ENCODE measurements at regions of chr1 and their contacts with region 1.

Region 1: GRCh38 chr1:221886743-221887413 is 145.0 kb upstream of the DUSP10 start:
- DNase-seq: peak; percentile 97 to 99
- H3K4me3 ChIP-seq: no peak overlapping the region; the same call in 1 of the 2 replicates
- H3K27ac ChIP-seq: peak overlapping the region; percentile 84
- H3K4me1 ChIP-seq: peaks cover 47% of the 10 kb centered on the region
- H3K27me3 ChIP-seq: no peaks in the 10 kb centered on the region
- CTCF ChIP-seq: no peak

Region 2: GRCh38 chr1:221435504-221435904 is 451.4 kb before region 1 on chr1:
- CTCF ChIA-PET with region 1: no interaction called
- POLR2A ChIA-PET with region 1: no interaction called
- intact Hi-C with region 1: loop called (anchors 1 kb)
- DNase-seq: peak in 1 of 2 experiments; percentile 45
- H3K4me3 ChIP-seq: no peak overlapping the region
- H3K27ac ChIP-seq: no peak overlapping the region
- H3K4me1 ChIP-seq: peaks cover 20% of the 10 kb centered on the region
- H3K27me3 ChIP-seq: no peaks in the 10 kb centered on the region
- CTCF ChIP-seq: peak; percentile 98

Region 3: GRCh38 chr1:221612264-221612777 is 274.6 kb before region 1 on chr1:
- CTCF ChIA-PET with region 1: no interaction called
- POLR2A ChIA-PET with region 1: no interaction called
- intact Hi-C with region 1: loop called (anchors 5 kb)
- DNase-seq: peak; percentile 69 to 87
- H3K4me3 ChIP-seq: peak overlapping the region; percentile 29; the same call in 1 of the 2 replicates
- H3K27ac ChIP-seq: peak overlapping the region; percentile 22; the same call in 1 of the 2 replicates
- H3K4me1 ChIP-seq: peaks cover 35% of the 10 kb centered on the region
- H3K27me3 ChIP-seq: no peaks in the 10 kb centered on the region
- CTCF ChIP-seq: no peak

Region 4: GRCh38 chr1:221958156-221958562 is 71.3 kb after region 1 on chr1:
- CTCF ChIA-PET with region 1: interaction called, 4 read pairs
- POLR2A ChIA-PET with region 1: interaction called, 6 read pairs
- intact Hi-C with region 1: loop called (anchors 1 kb)
- DNase-seq: peak; percentile 85 to 99
- H3K4me3 ChIP-seq: 0 out of 2 replicates have a peak overlapping the region, but pooled peaks have one; percentile 11
- H3K27ac ChIP-seq: peak overlapping the region; percentile 95
- H3K4me1 ChIP-seq: peaks cover 61% of the 10 kb centered on the region
- H3K27me3 ChIP-seq: no peaks in the 10 kb centered on the region
- CTCF ChIP-seq: no peak

Region 5: GRCh38 chr1:222105393-222105737 is 218.5 kb after region 1 on chr1:
- CTCF ChIA-PET with region 1: no interaction called
- POLR2A ChIA-PET with region 1: no interaction called
- intact Hi-C with region 1: loop called (anchors 1 kb)
- DNase-seq: peak in 1 of 2 experiments; percentile 61
- H3K4me3 ChIP-seq: no peak overlapping the region
- H3K27ac ChIP-seq: no peak overlapping the region
- H3K4me1 ChIP-seq: peaks cover 6% of the 10 kb centered on the region; the same call in 1 of the 2 replicates
- H3K27me3 ChIP-seq: no peaks in the 10 kb centered on the region
- CTCF ChIP-seq: peak; percentile 33; the same call in 1 of the 2 replicates